Activated naive CD4-positive, alpha-beta T cell treated with anti-CD3 and anti-CD28 coated beads for 36 hours (primary cell): ENCODE measurements at regions of chr1 and their contacts with region 1.

Region 1: GRCh38 chr1:11645670-11646265 is 8.5 kb downstream of the FBXO2 start:
- DNase-seq: peak; percentile 91
- H3K4me3 Mint-ChIP-seq: no peak overlapping the region
- H3K27ac Mint-ChIP-seq: no peak overlapping the region
- H3K4me1 Mint-ChIP-seq: peaks cover 10% of the 10 kb centered on the region
- H3K27me3 Mint-ChIP-seq: no peaks in the 10 kb centered on the region

Region 2: DNA sequence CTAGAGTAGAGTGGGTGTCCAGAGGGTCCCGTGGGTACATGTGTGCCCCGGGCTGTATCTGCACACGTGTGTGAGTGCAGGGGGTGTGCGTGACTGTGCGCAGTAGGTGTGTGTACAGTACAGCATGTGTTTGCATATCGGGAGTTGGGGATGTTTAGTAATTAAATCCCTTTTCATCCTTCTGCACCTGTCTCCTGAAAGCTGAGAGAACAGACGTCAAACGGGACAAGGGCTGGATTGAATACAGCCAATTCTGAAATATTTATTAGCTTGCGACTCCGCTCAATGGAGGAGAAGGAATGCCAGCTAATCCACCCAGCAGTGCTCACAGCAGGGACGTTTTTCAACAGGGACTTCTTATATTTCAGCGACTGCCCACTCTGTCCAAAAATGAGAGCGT is 804.6 kb before region 1 on chr1:
- CTCF ChIA-PET with region 1: no interaction called
- intact Hi-C with region 1: no loop called
- DNase-seq: no peak
- H3K4me3 Mint-ChIP-seq: no peak overlapping the region
- H3K27ac Mint-ChIP-seq: no peak overlapping the region
- H3K4me1 Mint-ChIP-seq: peaks cover 1% of the 10 kb centered on the region
- H3K27me3 Mint-ChIP-seq: peaks cover 15% of the 10 kb centered on the region

Region 3: GRCh38 chr1:11059990-11060830 is 585.6 kb before region 1 on chr1 and contains the start of gene SRM:
- CTCF ChIA-PET with region 1: interaction called, 3 read pairs
- intact Hi-C with region 1: loop called (anchors 5 kb)
- DNase-seq: peak; percentile 89
- H3K4me3 Mint-ChIP-seq: peak within 1 kb of the TSS; percentile 95
- H3K27ac Mint-ChIP-seq: peak within 1 kb of the TSS; percentile 82
- H3K4me1 Mint-ChIP-seq: peaks cover 45% of the 10 kb centered on the region
- H3K27me3 Mint-ChIP-seq: no peaks in the 10 kb centered on the region
- total RNA-seq, gene SRM: 207 to 222 TPM

Region 4: DNA sequence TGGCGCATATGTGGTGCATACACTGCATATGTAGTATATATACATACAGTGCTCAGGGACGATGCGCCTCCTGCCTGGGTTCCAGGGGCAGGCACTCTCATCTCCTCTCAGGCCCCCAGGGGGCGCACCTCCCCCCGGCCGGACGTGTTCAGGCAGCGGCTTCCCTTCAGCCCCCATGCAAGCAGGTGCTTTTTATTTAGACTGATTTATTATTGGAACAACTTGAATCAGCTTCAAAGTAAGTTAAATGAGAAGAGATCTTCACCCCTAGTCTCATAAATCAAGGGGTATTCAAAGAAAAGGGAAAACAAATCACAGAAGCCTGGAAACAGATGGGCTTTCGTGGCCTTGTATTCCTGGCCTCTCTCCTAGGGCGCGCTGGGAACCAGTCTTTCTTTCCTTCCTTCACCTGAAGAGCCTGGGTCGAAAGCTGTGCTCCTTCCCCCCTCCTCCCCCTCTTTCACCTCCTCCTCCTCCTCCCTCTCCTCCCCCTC is 308.1 kb before region 1 on chr1:
- CTCF ChIA-PET with region 1: interaction called, 4 read pairs
- intact Hi-C with region 1: loop called (anchors 1 kb)
- DNase-seq: peak; percentile 81
- H3K4me3 Mint-ChIP-seq: no peak overlapping the region
- H3K27ac Mint-ChIP-seq: no peak overlapping the region
- H3K4me1 Mint-ChIP-seq: peaks cover 14% of the 10 kb centered on the region
- H3K27me3 Mint-ChIP-seq: peaks cover 6% of the 10 kb centered on the region

Region 5: DNA sequence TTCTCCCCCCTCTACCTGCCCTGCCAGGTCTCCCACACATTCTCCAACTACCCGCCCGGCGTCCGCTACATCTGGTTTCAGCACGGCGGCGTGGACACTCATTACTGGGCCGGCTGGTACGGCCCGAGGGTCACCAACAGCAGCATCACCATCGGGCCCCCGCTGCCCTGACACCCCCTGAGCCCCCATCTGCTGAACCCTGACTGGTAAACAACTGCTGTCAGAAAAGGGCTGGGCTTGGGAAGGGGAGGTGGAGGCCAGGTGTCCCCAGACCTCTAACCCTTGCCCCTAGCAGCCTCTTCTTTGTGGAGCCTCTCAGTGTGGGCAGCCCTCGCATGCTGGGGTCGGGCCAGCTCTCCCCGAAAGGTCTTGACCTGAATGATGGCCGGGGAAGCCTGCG is 15.3 kb after region 1 on chr1:
- CTCF ChIA-PET with region 1: interaction called, 27 read pairs
- intact Hi-C with region 1: no loop called
- DNase-seq: no peak
- H3K4me3 Mint-ChIP-seq: no peak overlapping the region
- H3K27ac Mint-ChIP-seq: no peak overlapping the region
- H3K4me1 Mint-ChIP-seq: no peaks in the 10 kb centered on the region
- H3K27me3 Mint-ChIP-seq: no peaks in the 10 kb centered on the region

Region 6: DNA sequence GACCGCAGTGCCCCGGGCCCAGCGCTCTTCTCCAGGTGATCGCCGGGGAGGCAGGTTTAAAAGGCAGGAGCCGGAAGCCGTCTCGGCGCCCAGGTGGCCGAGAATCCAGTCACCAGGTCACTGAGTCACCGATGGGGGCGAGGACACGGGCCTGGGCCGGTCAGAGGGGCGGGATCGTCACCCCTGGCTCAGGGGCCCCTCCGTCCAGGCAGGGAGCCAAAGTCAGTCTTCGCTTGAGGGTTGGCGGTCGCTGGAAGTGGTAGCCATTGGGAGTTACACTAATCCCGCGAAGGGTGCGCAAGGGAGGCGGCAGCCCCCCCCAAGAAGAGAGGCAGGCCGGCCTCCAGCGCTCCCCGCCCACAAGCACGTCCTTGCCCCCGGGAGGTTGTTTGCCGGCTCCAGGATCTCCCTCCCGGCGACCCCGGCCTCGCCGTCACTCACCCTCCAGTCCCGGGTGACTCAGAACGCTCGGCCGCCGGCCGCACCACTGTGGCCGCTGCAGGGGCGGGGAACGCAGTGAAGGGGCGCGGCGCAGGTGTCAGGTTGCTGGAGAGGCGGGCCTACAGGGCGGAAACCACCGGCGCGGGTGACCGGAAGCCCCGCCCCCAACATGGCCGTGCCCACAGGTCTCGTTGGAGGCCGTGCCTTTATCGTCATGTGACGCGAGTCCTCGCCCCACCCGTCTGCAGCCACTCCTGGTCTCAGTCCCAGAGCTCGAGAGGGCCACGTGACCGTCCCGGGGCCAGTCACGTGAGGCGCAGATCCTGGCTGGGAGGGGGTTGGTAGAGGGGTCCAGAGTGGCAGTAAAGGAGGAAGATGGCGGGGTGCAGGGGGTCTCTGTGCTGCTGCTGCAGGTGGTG is 159.9 kb after region 1 on chr1 and contains the starts of genes CLCN6 and MTHFR:
- CTCF ChIA-PET with region 1: interaction called, 4 read pairs
- intact Hi-C with region 1: loop called (anchors 5 kb)
- DNase-seq: peak; percentile 99
- H3K4me3 Mint-ChIP-seq: peak within 1 kb of the TSS; percentile 99
- H3K27ac Mint-ChIP-seq: peak within 1 kb of the TSS; percentile 96
- H3K4me1 Mint-ChIP-seq: peaks cover 59% of the 10 kb centered on the region
- H3K27me3 Mint-ChIP-seq: no peaks in the 10 kb centered on the region
- total RNA-seq, gene CLCN6: 11.3 to 11.6 TPM
- total RNA-seq, gene MTHFR: 7.1 to 7.9 TPM